ENCODE measurements at regions of chr3 and their contacts with region 1.

Region 1: DNA sequence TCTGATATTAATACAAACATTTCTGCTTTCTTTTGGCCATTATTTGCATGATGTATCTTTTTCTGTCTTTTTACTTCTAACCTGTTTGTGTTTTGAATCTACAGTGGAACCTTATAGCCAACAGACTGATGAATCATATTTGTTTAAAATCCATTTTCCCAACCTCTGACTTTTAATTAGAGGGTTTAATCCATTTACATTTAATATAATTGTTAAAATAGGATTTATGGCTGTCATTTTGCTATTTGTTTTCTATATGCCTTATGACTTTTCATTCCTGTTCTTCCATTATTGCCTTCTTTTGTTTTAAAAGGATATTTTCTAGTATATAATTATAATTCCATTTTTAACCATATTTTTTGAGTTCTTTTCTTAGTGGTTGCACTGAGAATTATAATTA is 286.1 kb downstream of the ZNF621 start:
- DNase-seq: no peak

Region 2: GRCh38 chr3:40951636-40952035 is 140.8 kb after region 1 on chr3:
- intact Hi-C with region 1: no loop called
- DNase-seq: no peak

Region 3: DNA sequence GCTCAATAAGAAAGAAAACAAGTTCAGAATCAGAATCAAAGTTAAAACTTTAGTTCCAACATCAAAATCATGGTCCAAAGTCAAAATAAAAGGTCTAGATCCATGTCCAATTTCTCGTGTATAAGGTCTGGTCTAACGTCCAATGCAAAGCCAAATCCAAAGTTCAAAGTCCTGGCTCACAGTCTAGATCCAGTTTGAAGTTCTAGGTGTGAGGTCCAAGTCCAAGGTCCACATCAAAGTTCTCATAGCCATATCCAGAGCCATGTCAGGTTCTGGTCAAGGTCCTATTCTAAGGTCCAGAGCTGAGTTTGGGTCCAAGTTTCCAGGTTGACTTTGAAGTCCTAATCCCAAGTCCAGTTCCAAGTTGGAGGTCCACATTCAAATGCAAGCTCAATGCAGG is 1650.9 kb after region 1 on chr3:
- intact Hi-C with region 1: loop called in 1 of 2 experiments (anchors 5 kb)
- DNase-seq: no peak

Measured in posterior vena cava (tissue), 2 donors.